GM12878 (cell line): ENCODE measurements at regions of chr21 and their contacts with region 1.

Region 1: DNA sequence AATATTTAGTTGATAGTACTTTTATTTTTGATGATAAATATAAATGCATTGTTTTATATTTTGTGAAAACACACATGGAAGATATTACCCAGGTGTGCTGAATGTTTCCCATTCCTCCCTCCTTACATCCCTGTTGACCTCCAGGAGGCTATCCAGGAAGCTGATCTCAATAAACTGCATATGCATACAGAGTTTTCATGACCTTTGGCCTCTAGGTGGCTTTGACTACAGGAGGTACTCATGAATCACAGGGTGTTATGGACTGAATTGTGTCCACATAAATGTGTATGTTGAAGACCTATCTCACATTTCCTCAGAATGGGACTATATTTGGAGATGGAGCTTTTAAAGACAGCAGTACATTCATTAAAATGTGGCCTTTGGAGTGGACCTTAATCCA is 914.9 kb upstream of the NCAM2 start:
- DNase-seq: no peak
- ATAC-seq: no peak
- H3K4me3 ChIP-seq: no peak overlapping the region
- H3K27ac ChIP-seq: no peak overlapping the region
- H3K4me1 ChIP-seq: no peaks in the 10 kb centered on the region
- H3K27me3 ChIP-seq: no peaks in the 10 kb centered on the region
- CTCF ChIP-seq: no peak
- EP300 ChIP-seq: no peak
- POLR2A ChIP-seq: no peak
- RAD21 ChIP-seq: no peak

Region 2: DNA sequence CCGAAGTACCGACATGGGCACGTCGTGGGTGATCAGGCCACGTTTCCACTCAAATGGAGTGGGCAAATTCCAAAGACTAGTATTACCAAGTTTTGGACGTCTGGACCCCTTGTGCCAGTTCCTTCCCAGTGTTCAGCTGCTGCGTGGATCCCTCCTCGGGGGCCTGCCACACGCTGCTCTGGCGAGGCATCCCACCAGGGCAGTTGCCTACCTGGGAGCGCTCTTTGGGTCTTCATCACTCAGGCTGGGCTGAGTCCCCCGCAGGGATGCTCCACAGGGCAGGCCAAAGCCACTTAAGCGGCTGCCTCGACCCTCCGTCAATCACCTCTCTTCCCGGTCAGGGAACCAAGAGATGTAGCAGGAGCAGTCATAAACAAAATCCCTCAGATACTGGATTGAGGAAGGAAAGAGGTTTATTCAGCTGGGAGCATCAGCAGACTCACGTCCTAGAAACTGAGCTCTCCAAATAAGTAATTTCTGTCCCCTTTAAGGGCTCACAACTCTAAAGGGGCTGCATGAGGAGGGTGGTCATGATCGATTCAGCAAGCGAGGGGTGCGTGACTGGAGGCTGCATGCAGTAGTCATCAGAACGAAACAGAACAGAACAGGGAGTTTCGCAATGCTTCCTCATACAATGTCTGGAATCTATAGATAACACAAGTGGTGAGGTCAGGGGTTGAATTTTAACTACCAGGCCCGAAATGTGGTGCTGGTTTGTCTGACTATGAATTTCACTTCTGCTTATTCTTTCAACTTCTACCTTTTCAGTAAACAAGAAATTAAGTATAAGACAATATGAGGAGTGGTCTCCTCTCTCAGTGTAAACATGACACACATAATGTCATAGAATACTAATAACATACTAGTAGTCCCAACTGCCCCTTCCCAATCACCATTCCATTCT is 83.7 kb before region 1 on chr21:
- CTCF ChIA-PET with region 1: no interaction called
- POLR2A ChIA-PET with region 1: no interaction called
- RAD21 ChIA-PET with region 1: no interaction called
- SMC1A ChIA-PET with region 1: no interaction called
- in situ Hi-C with region 1: loop called (anchors 25 kb)
- intact Hi-C with region 1: no loop called
- DNase-seq: no peak
- ATAC-seq: peak; percentile 90
- H3K4me3 ChIP-seq: no peak overlapping the region
- H3K27ac ChIP-seq: no peak overlapping the region
- H3K4me1 ChIP-seq: no peaks in the 10 kb centered on the region
- H3K27me3 ChIP-seq: no peaks in the 10 kb centered on the region
- CTCF ChIP-seq: no peak
- EP300 ChIP-seq: peak; percentile 76 to 84; a peak in 2 of 4 replicates
- POLR2A ChIP-seq: no peak
- RAD21 ChIP-seq: no peak